Spleen (tissue), 13 donors: ENCODE measurements at regions of chr12 and their contacts with region 1.

Region 1: GRCh38 chr12:96061864-96062453 is 26.6 kb upstream of the LTA4H start:
- DNase-seq: peak; percentile 83
- H3K4me3 ChIP-seq: no peak overlapping the region
- H3K27ac ChIP-seq: peak overlapping the region in 4 of 8 donors; percentile 46 to 54 (median 49)
- H3K4me1 ChIP-seq: peaks cover 4 to 30% (median 26%) of the 10 kb centered on the region in 6 donors
- H3K27me3 ChIP-seq: no peaks in the 10 kb centered on the region
- CTCF ChIP-seq: peak; percentile 78 to 98 (median 88)
- POLR2A ChIP-seq: no peak

Region 2: DNA sequence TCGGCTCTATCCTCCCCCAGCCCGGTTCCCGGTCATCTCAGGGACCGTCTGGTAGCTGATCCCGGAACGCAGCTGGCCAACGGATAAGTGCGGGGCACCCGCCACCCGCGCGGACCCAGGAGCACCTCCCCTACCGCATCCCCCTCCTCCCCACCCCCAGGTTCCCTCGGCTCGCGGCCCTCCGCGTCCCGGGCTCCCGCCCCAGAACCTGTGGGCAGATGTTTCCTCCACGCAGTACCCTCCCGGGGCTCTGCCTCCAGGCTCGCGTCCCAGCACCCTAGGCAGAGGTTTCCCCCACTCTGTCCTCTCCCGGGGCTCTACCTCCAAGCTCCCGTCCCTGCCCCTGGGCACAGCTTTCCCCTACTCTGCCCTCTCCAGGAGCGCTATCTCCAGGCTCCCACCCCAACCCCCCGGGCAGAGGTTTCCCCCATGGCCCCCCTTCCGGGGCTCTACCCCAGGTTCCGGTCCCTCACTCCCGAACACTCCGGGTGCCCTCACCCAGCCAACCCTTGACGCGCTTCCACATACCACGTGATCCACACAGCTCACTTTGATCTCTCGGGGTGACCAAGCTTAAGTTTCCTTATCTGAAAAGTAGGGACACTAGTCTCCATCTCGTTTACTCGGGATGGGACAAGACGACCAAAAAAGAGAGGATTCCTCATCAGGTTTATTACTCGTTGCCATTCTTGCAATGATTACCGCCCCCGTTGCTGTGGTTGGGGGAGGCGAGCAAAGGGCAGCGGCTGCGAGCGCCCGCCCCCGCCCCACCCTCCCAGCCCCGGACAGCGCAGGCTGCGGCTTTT is 119.2 kb before region 1 on chr12 and contains the start of gene CCDC38:
- intact Hi-C with region 1: no loop called
- DNase-seq: peak; percentile 94
- H3K4me3 ChIP-seq: peak within 1 kb of the TSS; percentile 58 to 95 (median 86)
- H3K27ac ChIP-seq: peak within 1 kb of the TSS; percentile 82 to 95 (median 91)
- H3K4me1 ChIP-seq: peaks cover 0 to 37% (median 20%) of the 10 kb centered on the region in 6 donors
- H3K27me3 ChIP-seq: no peaks in the 10 kb centered on the region
- CTCF ChIP-seq: no peak
- POLR2A ChIP-seq: peak in 1 of 3 donors; percentile 1
- total RNA-seq, gene CCDC38: 0.34 to 2.1 (median 1.2) TPM in 6 of 7 donors, not detected in the other

Region 3: DNA sequence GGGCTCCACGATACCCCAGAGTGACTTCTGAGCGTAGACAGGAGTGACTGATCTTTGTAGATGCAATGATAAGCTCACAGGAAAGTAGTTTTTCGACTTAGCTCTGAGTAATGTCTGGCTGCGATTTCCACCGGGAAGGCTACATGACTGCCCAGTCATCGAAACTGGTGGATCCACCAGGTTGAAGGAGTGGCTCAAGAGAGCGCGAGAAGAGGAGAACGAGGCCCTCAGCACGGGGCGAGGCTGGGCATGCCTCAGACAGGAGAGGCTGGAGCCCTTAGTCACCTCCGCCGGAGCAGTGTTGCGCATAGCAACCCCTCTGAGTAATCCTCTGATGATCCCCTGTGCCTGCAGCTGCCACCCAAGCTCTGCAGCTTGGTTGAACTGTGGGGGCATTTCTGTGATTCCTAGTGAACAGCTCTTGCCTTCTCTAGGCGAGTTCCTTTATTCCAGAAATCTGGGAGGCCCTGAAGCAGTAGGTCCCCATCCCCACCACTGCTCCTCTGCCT is 157.8 kb after region 1 on chr12:
- intact Hi-C with region 1: loop called (anchors 2 kb)
- DNase-seq: no peak
- H3K4me3 ChIP-seq: no peak overlapping the region
- H3K27ac ChIP-seq: peak overlapping the region in 1 of 8 donors; percentile 17
- H3K4me1 ChIP-seq: peaks cover 13 to 62% (median 42%) of the 10 kb centered on the region in 6 donors
- H3K27me3 ChIP-seq: no peaks in the 10 kb centered on the region
- CTCF ChIP-seq: no peak
- POLR2A ChIP-seq: no peak

Region 4: DNA sequence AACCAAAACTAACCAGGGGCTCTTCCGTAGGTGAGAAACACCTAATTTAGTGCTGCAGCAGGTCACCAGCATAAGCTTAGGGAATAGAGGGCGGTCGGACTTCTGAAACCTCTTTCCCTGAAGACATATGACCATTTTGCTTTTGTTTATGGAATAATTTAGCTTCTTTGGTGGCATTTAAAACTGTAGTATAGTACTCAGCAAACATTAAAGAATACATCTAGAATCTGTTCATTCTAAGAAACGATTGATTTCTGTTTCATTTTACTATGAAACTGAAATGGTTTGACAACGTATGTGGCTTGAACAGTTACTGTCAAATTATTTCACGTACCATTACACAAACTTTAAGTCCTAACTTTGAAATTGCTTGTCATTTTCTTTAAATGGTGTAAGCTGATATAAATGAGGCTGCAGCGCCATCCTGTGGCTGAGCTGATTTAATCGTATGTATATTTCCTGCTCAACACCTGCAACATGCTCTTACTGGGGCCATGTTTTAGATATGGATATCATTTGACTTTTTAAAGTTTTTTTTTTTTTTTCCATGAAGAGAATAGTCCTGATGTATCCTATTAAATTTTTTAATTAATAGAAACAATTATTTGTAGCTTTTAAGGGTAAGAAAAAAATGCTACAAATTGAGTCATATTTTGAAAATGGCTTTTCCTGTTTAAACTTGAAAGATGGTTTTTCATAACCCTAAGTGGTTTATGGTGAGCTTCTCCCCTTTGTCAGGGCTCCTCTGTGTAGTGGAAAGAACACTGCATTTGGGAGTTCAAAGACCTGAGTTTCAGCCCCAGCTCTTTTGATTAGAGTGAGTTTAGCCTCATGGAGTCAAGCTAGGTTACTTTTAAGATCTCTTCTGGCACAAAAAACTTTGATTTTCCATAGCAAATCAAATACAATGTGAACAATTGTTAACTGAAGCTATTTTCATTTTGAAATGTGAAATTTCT is 454.8 kb after region 1 on chr12:
- intact Hi-C with region 1: loop called (anchors 5 kb)
- DNase-seq: peak; percentile 90
- H3K4me3 ChIP-seq: peak overlapping the region in 1 of 8 donors; percentile 5
- H3K27ac ChIP-seq: peak overlapping the region in 2 of 8 donors; percentile 23 to 49
- H3K4me1 ChIP-seq: peaks cover 0 to 17% (median 6%) of the 10 kb centered on the region in 6 donors
- H3K27me3 ChIP-seq: no peaks in the 10 kb centered on the region
- CTCF ChIP-seq: peak; percentile 31 to 92 (median 74)
- POLR2A ChIP-seq: no peak